ENCODE measurements at regions of chr3 and their contacts with region 1.

Region 1: GRCh38 chr3:152257563-152258035 is 11.1 kb upstream of the MBNL1 start:
- DNase-seq: no peak
- H3K4me3 ChIP-seq: no peak overlapping the region
- H3K27ac ChIP-seq: peak overlapping the region; percentile 66 to 82
- H3K4me1 ChIP-seq: peaks cover 3 to 28% of the 10 kb centered on the region in 2 donors
- H3K27me3 ChIP-seq: no peaks in the 10 kb centered on the region
- CTCF ChIP-seq: no peak

Region 2: GRCh38 chr3:152206243-152206760 is 51.3 kb before region 1 on chr3:
- intact Hi-C with region 1: loop called (anchors 2 kb)
- DNase-seq: no peak
- H3K4me3 ChIP-seq: no peak overlapping the region
- H3K27ac ChIP-seq: peak overlapping the region; percentile 89 to 90
- H3K4me1 ChIP-seq: peaks cover 2 to 43% of the 10 kb centered on the region in 2 donors
- H3K27me3 ChIP-seq: no peaks in the 10 kb centered on the region
- CTCF ChIP-seq: no peak